ENCODE measurements at regions of chr22 and their contacts with region 1.

Region 1: DNA sequence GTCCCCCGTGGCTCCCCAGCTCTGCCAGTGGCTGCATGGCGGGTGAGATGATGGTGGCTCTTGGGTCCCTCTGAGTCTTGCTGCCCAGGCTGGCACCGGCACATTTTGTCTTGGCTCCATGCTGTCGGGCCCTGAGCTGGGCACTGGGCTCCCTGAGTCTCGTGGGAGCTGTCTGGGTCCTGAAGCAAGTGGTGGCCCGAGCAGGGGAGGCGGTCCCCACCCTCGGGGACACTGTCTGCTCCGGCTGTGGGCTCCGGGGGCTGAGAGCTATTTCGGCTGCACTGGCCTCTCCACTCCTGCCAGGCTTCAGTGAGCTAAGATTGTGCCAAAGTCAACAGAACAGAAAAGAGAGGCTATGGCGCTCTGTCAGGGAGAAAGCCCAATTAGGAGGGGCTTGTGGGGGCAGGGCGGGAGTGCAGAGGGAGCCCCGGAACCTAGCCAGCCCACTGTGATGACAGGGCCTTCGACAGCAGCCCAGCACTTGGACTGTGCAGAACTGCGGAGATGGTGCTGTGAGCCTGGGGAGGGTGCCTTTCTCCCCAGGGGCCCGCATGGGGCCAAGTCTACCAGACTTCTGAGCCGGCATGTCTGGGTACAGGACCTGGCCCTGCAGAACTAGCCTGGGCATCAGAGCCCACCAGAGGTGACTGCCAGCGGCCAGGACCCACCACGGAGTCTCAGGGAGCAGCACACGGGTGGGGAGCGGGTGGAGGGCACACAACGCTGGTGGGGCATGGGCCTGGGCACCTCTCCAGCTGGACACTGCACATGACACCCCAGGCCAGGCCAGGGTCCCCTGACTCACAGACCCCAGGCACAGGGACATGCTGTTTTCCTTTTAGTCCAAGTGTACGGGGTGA is 38.0 kb downstream of the RTN4R start:
- DNase-seq: no peak
- H3K4me3 ChIP-seq: no peak overlapping the region
- H3K27ac ChIP-seq: no peak overlapping the region
- H3K4me1 ChIP-seq: peaks cover 0 to 10% (median 0%) of the 10 kb centered on the region in 3 donors
- H3K27me3 ChIP-seq: peaks cover 0 to 16% (median 0%) of the 10 kb centered on the region in 4 donors
- CTCF ChIP-seq: no peak
- POLR2A ChIP-seq: no peak

Region 2: GRCh38 chr22:19503869-19504268 is 726.3 kb before region 1 on chr22:
- intact Hi-C with region 1: no loop called
- DNase-seq: no peak
- H3K4me3 ChIP-seq: no peak overlapping the region
- H3K27ac ChIP-seq: no peak overlapping the region
- H3K4me1 ChIP-seq: no peaks in the 10 kb centered on the region
- H3K27me3 ChIP-seq: no peaks in the 10 kb centered on the region
- CTCF ChIP-seq: no peak
- POLR2A ChIP-seq: no peak

Region 3: DNA sequence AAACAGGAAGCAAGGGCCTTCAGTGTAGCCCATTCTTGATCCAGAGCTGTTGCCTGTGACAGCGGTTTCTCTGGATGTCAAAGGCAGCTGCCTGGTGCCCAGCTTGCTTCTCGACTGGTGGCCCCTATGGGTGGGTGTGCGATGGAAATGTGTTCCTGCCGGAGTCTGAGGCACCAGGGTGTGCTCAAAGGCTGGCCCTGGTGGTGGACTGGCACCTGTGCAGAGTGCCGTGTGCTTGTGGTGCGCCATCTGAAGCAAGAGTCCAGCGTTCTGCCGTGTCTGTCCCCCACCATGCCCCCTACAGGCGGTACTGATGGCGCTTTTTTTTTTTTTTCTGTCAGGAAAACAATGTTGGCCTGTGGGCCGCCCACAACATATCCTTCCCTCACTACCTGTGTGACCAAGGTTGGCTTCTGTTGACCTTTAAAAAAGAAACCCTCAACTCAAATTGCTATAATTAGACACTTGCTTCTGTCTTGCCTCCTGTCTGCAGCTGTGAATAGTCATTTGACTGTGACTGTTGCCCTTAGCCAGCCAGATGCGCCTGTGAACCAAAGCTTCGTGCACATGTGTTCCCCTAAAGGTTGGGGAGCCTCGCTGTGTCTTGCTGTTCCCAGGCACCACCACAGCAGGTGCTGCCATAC is 119.0 kb before region 1 on chr22:
- intact Hi-C with region 1: no loop called
- DNase-seq: no peak
- H3K4me3 ChIP-seq: no peak overlapping the region
- H3K27ac ChIP-seq: no peak overlapping the region
- H3K4me1 ChIP-seq: peaks cover 8 to 28% (median 8%) of the 10 kb centered on the region in 3 donors
- H3K27me3 ChIP-seq: no peaks in the 10 kb centered on the region
- CTCF ChIP-seq: peak in 3 of 6 experiments; percentile 11 to 33 (median 31)
- POLR2A ChIP-seq: no peak

Region 4: DNA sequence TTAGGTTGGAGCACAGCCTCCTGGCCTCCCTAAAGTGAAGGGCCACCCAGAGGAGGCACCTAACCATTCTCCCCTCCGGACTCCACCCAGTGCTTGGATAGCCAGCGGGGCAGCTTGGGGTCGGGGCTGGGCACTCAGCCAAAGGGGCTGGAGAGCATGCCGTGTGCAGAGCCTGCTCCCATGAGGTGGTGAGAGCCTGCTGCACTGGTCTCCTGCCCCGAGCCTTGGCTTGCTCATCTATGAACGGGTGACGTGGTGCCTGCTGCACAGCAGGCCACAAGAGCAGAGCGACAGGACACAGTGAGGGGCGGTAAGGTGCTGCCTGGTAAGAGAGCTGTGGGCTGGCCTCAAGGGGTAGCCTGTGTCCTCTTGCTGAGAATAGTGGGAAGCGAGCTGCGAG is 65.3 kb before region 1 on chr22:
- intact Hi-C with region 1: loop called (anchors 10 kb)
- DNase-seq: no peak
- H3K4me3 ChIP-seq: no peak overlapping the region
- H3K27ac ChIP-seq: no peak overlapping the region
- H3K4me1 ChIP-seq: no peaks in the 10 kb centered on the region
- H3K27me3 ChIP-seq: peaks cover 0 to 15% (median 0%) of the 10 kb centered on the region in 4 donors
- CTCF ChIP-seq: no peak
- POLR2A ChIP-seq: no peak

Region 5: DNA sequence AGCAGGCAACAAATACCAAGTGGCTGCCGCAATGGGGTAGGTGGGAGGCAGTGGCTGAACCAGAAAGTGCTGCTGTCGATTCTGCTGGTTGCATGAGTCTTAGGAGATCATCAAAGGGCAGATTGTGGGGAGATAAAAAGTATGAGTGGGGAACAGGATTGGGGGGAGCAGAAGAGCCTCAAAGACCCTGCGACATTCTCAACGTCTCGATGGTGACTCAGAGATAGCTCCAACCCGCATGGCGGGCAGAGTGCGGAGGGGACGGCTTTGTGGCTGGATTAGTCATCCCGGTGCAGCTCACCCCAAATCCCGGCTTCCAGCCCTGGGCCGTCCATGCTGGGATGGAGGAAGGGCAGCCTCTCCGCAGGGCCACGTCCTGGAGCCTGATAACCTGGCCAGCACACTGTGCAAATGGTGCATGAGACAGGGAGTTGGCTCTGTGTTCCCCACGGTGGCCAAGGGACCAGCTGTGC is 49.6 kb after region 1 on chr22:
- intact Hi-C with region 1: no loop called
- DNase-seq: no peak
- H3K4me3 ChIP-seq: no peak overlapping the region
- H3K27ac ChIP-seq: no peak overlapping the region
- H3K4me1 ChIP-seq: no peaks in the 10 kb centered on the region
- H3K27me3 ChIP-seq: peaks cover 0 to 6% (median 0%) of the 10 kb centered on the region in 4 donors
- CTCF ChIP-seq: no peak
- POLR2A ChIP-seq: no peak

Measured in esophagus squamous epithelium (tissue), 5 donors.